Heart left ventricle (tissue), 16 donors: ENCODE measurements at regions of chr4 and their contacts with region 1.

Region 1: DNA sequence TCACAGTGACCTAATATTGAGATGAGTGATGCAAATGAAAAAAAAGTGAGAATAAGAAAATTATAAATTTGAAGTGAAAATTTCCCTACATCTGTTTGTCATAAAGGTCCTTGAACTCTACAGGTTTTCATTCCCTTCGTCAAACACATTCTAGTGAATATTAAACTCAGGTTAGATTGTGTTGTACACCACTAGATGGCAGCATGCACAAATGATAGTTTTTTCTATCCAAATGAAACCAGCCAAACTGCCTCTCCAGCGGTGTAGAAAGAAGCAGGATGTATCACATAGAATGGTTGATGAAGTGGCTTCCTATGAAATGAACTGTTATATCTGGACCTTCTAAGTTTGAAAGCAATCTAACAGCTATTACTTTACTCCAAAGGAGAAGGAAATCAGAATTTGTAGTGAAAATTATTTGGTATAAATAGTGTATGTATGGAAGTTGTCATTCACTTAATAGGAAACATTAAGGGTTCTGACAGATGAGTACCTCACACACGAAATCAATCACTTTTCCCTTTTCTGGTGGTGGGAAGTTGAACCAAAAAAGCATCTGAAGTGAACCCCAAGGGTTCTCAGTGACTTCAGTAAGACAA is 382.7 kb downstream of the UNC5C start:
- DNase-seq: peak in 1 of 5 donors; percentile 20
- ATAC-seq: peak in 3 of 4 donors; percentile 56 to 79 (median 68)
- H3K4me3 ChIP-seq: no peak overlapping the region
- H3K27ac ChIP-seq: no peak overlapping the region
- H3K4me1 ChIP-seq: no peaks in the 10 kb centered on the region
- H3K27me3 ChIP-seq: no peaks in the 10 kb centered on the region
- CTCF ChIP-seq: peak; percentile 53 to 77 (median 71)
- POLR2A ChIP-seq: no peak

Region 2: GRCh38 chr4:95549246-95550114 is 383.5 kb after region 1 on chr4:
- intact Hi-C with region 1: loop called in 1 of 10 experiments (anchors 10 kb)
- DNase-seq: peak; percentile 59 to 80 (median 68)
- ATAC-seq: peak; percentile 50 to 79 (median 63)
- H3K4me3 ChIP-seq: peak overlapping the region; percentile 46 to 78 (median 68)
- H3K27ac ChIP-seq: peak overlapping the region; percentile 69 to 90 (median 84)
- H3K4me1 ChIP-seq: peaks cover 0 to 24% (median 0%) of the 10 kb centered on the region in 12 donors
- H3K27me3 ChIP-seq: peaks cover 3 to 49% (median 18%) of the 10 kb centered on the region in 9 donors
- CTCF ChIP-seq: no peak
- POLR2A ChIP-seq: no peak

Region 3: GRCh38 chr4:96035727-96036126 is 869.7 kb after region 1 on chr4:
- intact Hi-C with region 1: loop called in 2 of 10 experiments (anchors 5 to 10 kb)
- DNase-seq: no peak
- ATAC-seq: no peak
- H3K4me3 ChIP-seq: no peak overlapping the region
- H3K27ac ChIP-seq: no peak overlapping the region
- H3K4me1 ChIP-seq: no peaks in the 10 kb centered on the region
- H3K27me3 ChIP-seq: no peaks in the 10 kb centered on the region
- CTCF ChIP-seq: peak in 11 of 12 donors; percentile 9 to 56 (median 35)
- POLR2A ChIP-seq: no peak

Region 4: DNA sequence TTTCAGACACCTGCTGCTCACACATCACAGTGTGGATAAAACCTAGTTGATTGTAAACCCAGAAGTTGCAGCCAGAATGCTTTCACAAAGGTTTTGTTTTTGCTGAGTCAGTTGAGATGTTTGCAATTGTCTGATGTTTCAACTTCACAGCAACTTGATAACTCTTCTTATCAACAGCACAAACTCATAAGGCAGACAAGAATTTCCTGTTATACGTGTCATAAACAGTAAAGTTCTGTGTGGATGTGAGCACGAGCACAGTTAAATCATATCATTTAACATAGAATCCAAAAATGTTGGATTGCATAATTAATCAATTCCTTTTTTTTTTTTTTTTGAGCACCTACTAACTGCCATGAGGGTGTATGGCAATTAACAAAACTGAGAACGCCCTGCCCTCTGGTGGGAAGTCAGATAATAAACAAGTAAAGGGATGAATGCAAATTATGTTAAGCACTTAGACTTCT is 1186.1 kb after region 1 on chr4:
- intact Hi-C with region 1: loop called in 3 of 10 experiments (anchors 2 to 5 kb)
- DNase-seq: no peak
- ATAC-seq: no peak
- H3K4me3 ChIP-seq: no peak overlapping the region
- H3K27ac ChIP-seq: no peak overlapping the region
- H3K4me1 ChIP-seq: peaks cover 0 to 15% (median 0%) of the 10 kb centered on the region in 12 donors
- H3K27me3 ChIP-seq: no peaks in the 10 kb centered on the region
- CTCF ChIP-seq: peak in 8 of 12 donors; percentile 13 to 46 (median 30)
- POLR2A ChIP-seq: no peak